ENCODE measurements at regions of chr14 and their contacts with region 1.

Region 1: DNA sequence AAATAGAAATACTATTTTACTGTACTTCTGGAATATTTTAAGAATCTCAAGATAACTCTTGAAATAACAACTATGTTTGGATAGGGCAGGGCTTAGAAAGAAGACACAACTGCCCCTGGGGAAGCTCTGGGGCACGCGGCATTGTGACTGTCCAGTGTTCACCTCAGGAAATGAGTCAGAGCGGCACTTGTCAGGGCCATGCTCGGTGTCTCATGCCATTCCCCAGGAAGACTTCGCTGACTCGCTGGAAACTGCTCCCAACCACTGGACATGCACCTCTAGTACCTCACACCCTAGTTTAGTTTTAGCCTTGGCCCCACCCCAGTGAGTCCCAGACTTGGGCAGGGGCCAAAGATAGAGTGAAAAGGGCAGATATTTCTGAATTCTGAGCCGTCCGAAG is 192.0 kb downstream of the TTC7B start:
- DNase-seq: peak in 1 of 2 donors; percentile 57
- H3K4me3 ChIP-seq: no peak overlapping the region
- H3K27ac ChIP-seq: no peak overlapping the region
- H3K4me1 ChIP-seq: no peaks in the 10 kb centered on the region
- H3K27me3 ChIP-seq: no peaks in the 10 kb centered on the region
- CTCF ChIP-seq: no peak
- POLR2A ChIP-seq: no peak

Region 2: GRCh38 chr14:90168425-90169105 is 455.7 kb before region 1 on chr14:
- intact Hi-C with region 1: no loop called
- DNase-seq: no peak
- H3K4me3 ChIP-seq: no peak overlapping the region
- H3K27ac ChIP-seq: no peak overlapping the region
- H3K4me1 ChIP-seq: no peaks in the 10 kb centered on the region
- H3K27me3 ChIP-seq: no peaks in the 10 kb centered on the region
- CTCF ChIP-seq: no peak
- POLR2A ChIP-seq: no peak

Region 3: GRCh38 chr14:90639641-90640040 is 15.4 kb after region 1 on chr14:
- intact Hi-C with region 1: no loop called
- DNase-seq: no peak
- H3K4me3 ChIP-seq: no peak overlapping the region
- H3K27ac ChIP-seq: no peak overlapping the region
- H3K4me1 ChIP-seq: no peaks in the 10 kb centered on the region
- H3K27me3 ChIP-seq: no peaks in the 10 kb centered on the region
- CTCF ChIP-seq: no peak
- POLR2A ChIP-seq: no peak

Region 4: GRCh38 chr14:91078095-91078737 is 454.0 kb after region 1 on chr14:
- intact Hi-C with region 1: loop called (anchors 5 kb)
- DNase-seq: no peak
- H3K4me3 ChIP-seq: no peak overlapping the region
- H3K27ac ChIP-seq: peak overlapping the region in 1 of 2 donors; percentile 29
- H3K4me1 ChIP-seq: no peaks in the 10 kb centered on the region
- H3K27me3 ChIP-seq: no peaks in the 10 kb centered on the region
- CTCF ChIP-seq: no peak
- POLR2A ChIP-seq: no peak